Caco-2 (cell line): ENCODE measurements at regions of chr14 and their contacts with region 1.

Region 1: GRCh38 chr14:90399541-90400444 is 3.0 kb downstream of the CALM1 start:
- DNase-seq: peak; percentile 82 to 90
- H3K4me3 ChIP-seq: no peak overlapping the region
- H3K4me3 Mint-ChIP-seq: peak overlapping the region; percentile 57
- H3K27ac Mint-ChIP-seq: no peak overlapping the region
- H3K4me1 ChIP-seq: peaks cover 12% of the 10 kb centered on the region
- H3K4me1 Mint-ChIP-seq: no peaks in the 10 kb centered on the region
- H3K27me3 ChIP-seq: no peaks in the 10 kb centered on the region
- H3K27me3 Mint-ChIP-seq: no peaks in the 10 kb centered on the region
- CTCF ChIP-seq: peak; percentile 96 to 98

Region 2: DNA sequence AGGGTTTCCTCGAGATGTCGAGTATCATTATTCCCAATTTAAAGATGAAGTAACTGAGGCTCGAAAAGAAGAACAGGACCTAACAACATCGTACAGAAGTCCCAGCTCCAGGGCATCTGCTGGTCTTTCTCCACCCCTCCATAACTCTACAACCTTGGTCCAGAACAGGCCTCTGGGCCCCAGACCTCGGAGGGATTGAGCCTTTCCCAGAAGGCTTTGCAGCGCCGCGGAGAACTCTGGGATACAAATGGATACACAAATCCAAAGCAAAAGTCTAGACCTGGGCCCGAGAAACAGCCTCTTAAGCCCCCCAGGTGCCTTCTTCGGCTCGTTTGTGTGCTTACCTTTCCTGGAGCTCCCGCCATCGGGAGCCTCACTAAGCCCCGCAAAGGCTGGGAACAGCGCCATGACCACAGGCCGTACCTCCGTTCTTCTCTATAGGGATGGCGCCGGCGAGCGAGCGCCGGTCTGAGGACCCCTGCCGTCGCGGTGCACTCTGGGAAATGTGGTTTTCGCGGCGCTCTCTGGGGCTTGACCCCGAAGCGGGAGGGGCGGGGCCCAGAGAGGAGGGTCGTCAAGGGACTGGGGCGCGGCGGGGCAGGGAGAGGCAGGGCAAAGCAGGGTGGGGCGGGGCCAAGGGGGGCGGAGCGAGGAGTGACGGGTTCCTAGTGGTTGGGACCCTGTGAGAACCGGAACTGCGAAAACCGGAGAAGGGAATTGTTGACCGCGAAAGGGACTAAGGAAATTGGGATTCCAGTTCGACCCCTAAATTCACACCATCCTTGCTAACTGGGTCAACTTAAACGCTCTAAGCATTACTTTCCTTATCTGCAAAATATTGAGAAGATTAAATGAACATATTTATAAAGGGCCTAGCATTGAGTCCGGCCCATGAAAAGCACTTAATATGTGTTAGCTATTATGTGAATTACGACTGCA is 68.0 kb before region 1 on chr14 and contains the start of gene NRDE2:
- CTCF ChIA-PET with region 1: no interaction called
- POLR2A ChIA-PET with region 1: no interaction called
- intact Hi-C with region 1: loop called (anchors 5 kb)
- DNase-seq: peak; percentile 99
- H3K4me3 ChIP-seq: peak within 1 kb of the TSS; percentile 37
- H3K4me3 Mint-ChIP-seq: peak within 1 kb of the TSS; percentile 91
- H3K27ac Mint-ChIP-seq: peak within 1 kb of the TSS; percentile 95
- H3K4me1 ChIP-seq: peaks cover 18% of the 10 kb centered on the region
- H3K4me1 Mint-ChIP-seq: peaks cover 16% of the 10 kb centered on the region
- H3K27me3 ChIP-seq: no peaks in the 10 kb centered on the region
- H3K27me3 Mint-ChIP-seq: no peaks in the 10 kb centered on the region
- CTCF ChIP-seq: no peak
- total RNA-seq, gene NRDE2: 17.1 and 18.0 TPM in 2 replicates

Region 3: DNA sequence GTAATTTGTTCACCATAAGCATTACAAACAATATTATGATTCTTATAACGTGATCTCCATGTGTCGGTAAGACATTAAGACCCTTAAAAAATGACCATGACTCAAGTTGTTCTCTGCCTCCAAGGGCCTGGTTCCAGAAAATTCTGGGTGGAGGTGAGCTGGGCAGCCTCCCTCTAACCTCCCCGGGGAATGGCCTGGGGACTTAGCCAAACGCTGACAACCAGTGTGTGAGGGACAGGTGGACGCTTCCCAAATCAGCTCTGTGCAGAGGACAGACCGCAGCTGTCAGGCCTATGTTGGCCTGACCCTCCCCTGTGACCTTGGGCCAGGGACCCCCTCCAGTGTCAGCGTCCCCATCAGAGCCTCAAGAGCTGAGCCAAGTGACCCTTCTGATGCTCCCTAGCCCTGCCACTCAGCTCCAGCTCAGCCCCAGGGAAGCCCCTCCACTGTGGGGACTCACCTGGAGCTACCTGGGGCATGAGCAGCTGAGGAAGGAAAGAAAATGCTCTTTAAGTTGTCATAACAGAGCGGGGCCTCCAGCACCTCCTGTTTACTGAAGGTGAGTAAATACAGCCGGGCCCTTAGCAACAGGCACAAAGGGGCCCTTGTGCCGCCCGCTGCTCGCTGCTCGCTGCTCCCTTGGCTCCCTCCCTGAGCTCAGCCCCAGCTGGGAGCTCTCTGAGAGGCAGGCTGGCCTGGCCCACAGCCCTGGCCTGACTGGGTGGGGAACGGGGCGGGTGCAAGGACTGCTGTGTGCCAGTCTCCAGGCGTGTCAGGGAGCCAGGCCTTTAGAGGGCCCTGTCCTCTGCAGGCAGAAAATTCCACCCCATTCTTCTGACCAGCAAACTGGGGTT is 113.6 kb after region 1 on chr14:
- CTCF ChIA-PET with region 1: interaction called, 21 read pairs
- POLR2A ChIA-PET with region 1: interaction called, 7 read pairs
- intact Hi-C with region 1: loop called (anchors 1 kb)
- DNase-seq: peak; percentile 89 to 91
- H3K4me3 ChIP-seq: peak overlapping the region; percentile 8; the same call in 1 of the 2 replicates
- H3K4me3 Mint-ChIP-seq: peak overlapping the region; percentile 69
- H3K27ac Mint-ChIP-seq: peak overlapping the region; percentile 99
- H3K4me1 ChIP-seq: peaks cover 99% of the 10 kb centered on the region
- H3K4me1 Mint-ChIP-seq: peaks cover 46% of the 10 kb centered on the region
- H3K27me3 ChIP-seq: no peaks in the 10 kb centered on the region
- H3K27me3 Mint-ChIP-seq: no peaks in the 10 kb centered on the region
- CTCF ChIP-seq: no peak

Region 4: GRCh38 chr14:90554341-90554740 is 154.5 kb after region 1 on chr14:
- CTCF ChIA-PET with region 1: interaction called, 5 read pairs
- POLR2A ChIA-PET with region 1: no interaction called
- intact Hi-C with region 1: loop called (anchors 5 kb)
- DNase-seq: no peak
- H3K4me3 ChIP-seq: no peak overlapping the region
- H3K4me3 Mint-ChIP-seq: no peak overlapping the region
- H3K27ac Mint-ChIP-seq: no peak overlapping the region
- H3K4me1 ChIP-seq: peaks cover 27% of the 10 kb centered on the region
- H3K4me1 Mint-ChIP-seq: peaks cover 10% of the 10 kb centered on the region
- H3K27me3 ChIP-seq: no peaks in the 10 kb centered on the region
- H3K27me3 Mint-ChIP-seq: no peaks in the 10 kb centered on the region
- CTCF ChIP-seq: no peak

Region 5: GRCh38 chr14:90697577-90698206 is 297.9 kb after region 1 on chr14:
- CTCF ChIA-PET with region 1: interaction called, 7 read pairs
- POLR2A ChIA-PET with region 1: no interaction called
- intact Hi-C with region 1: loop called (anchors 1 kb)
- DNase-seq: peak; percentile 79 to 85
- H3K4me3 ChIP-seq: no peak overlapping the region
- H3K4me3 Mint-ChIP-seq: no peak overlapping the region
- H3K27ac Mint-ChIP-seq: peak overlapping the region; percentile 55
- H3K4me1 ChIP-seq: no peaks in the 10 kb centered on the region
- H3K4me1 Mint-ChIP-seq: peaks cover 6% of the 10 kb centered on the region
- H3K27me3 ChIP-seq: no peaks in the 10 kb centered on the region
- H3K27me3 Mint-ChIP-seq: no peaks in the 10 kb centered on the region
- CTCF ChIP-seq: peak; percentile 80 to 93

Region 6: GRCh38 chr14:90999299-90999698 is 599.5 kb after region 1 on chr14:
- CTCF ChIA-PET with region 1: no interaction called
- POLR2A ChIA-PET with region 1: no interaction called
- intact Hi-C with region 1: no loop called
- DNase-seq: no peak
- H3K4me3 ChIP-seq: no peak overlapping the region
- H3K4me3 Mint-ChIP-seq: no peak overlapping the region
- H3K27ac Mint-ChIP-seq: no peak overlapping the region
- H3K4me1 ChIP-seq: no peaks in the 10 kb centered on the region
- H3K4me1 Mint-ChIP-seq: no peaks in the 10 kb centered on the region
- H3K27me3 ChIP-seq: no peaks in the 10 kb centered on the region
- H3K27me3 Mint-ChIP-seq: no peaks in the 10 kb centered on the region
- CTCF ChIP-seq: no peak